ENCODE measurements at regions of chr2 and their contacts with region 1.

Region 1: DNA sequence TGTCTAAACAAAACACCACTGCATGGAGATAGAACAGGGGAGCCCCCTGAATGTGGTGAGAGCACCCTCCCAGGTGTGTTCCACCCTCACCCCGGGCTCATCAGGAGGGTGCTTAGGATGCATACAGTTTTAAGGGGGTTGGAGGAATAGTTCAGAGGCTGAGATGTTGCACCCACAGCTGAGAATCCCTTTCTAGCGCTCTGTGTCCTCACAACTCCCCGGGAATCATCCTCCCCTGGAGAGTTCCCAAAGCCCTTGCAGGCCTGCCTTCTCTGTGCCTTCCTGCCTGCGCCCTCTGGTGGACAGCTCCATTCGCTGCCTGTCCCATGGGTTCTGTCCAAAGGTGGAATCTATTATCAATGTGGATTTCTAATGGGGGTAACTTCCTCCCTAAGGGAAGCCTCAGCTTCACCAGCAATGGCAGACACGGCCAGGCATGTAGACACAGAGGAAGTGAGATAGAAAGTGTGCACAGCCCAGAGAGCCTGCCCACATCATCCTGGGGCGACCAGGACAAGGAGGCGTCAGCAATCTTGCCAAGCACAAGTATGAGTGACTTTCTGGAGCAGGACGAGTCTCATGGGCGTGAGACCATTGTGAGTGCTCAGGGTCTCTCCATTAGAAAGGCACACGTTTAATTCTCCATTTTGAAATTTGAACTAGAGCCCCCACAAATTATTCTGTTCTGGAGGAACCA is 1.2 kb upstream of the UGT1A5 start:
- DNase-seq: peak; percentile 75 to 78
- H3K4me3 ChIP-seq: no peak overlapping the region
- H3K4me3 Mint-ChIP-seq: no peak overlapping the region
- H3K27ac Mint-ChIP-seq: peak overlapping the region; percentile 6
- H3K4me1 ChIP-seq: peaks cover 22% of the 10 kb centered on the region
- H3K4me1 Mint-ChIP-seq: peaks cover 11% of the 10 kb centered on the region
- H3K27me3 ChIP-seq: no peaks in the 10 kb centered on the region
- H3K27me3 Mint-ChIP-seq: no peaks in the 10 kb centered on the region
- CTCF ChIP-seq: peak; percentile 64 to 78

Region 2: GRCh38 chr2:233480490-233481202 is 230.8 kb before region 1 on chr2:
- CTCF ChIA-PET with region 1: no interaction called
- POLR2A ChIA-PET with region 1: no interaction called
- intact Hi-C with region 1: loop called (anchors 2 kb)
- DNase-seq: peak in 1 of 2 experiments; percentile 36
- H3K4me3 ChIP-seq: no peak overlapping the region
- H3K4me3 Mint-ChIP-seq: peak overlapping the region; percentile 31
- H3K27ac Mint-ChIP-seq: peak overlapping the region; percentile 42
- H3K4me1 ChIP-seq: peaks cover 7% of the 10 kb centered on the region
- H3K4me1 Mint-ChIP-seq: peaks cover 11% of the 10 kb centered on the region
- H3K27me3 ChIP-seq: no peaks in the 10 kb centered on the region
- H3K27me3 Mint-ChIP-seq: no peaks in the 10 kb centered on the region
- CTCF ChIP-seq: no peak

Region 3: DNA sequence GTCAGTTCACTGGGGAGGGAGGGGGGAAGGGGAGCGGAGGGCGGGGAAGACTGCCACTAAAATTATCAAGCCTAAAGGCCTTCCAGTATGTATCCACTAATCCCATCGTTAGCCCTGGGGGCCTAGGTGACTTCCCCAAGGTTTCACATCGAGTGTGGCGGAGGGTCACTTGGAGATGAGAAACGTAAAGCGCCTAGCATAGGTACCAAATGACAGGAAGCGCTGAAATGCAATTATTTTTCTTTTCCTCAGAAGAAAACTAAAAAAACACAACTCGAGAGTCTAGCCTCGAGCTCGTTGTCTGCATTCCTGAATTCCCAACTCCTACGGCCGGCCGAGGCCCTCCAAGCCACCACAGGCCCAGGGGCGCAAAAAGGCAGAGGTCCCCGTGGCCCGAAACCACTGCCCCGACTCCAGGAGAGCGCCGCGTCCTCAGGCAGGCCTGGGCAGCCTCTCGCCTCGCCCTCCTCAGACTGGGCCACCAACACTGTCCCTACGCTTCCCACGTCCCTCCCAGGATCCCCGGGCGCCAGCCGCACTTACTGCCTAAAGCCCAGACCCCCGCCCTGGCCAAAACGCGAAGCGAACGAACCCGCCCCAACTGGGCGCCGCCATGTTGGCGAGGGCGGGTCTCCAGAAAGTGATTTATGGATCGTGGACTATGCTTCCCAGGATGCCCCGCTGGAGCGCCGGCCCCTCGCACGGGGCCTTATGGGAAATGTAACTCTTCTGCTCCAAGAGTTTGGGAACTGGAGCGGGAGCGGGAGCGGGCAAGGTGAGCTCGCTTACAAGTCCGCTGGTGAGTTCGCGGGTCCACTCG is 145.1 kb before region 1 on chr2 and contains the start of gene USP40:
- CTCF ChIA-PET with region 1: no interaction called
- POLR2A ChIA-PET with region 1: no interaction called
- intact Hi-C with region 1: loop called (anchors 5 kb)
- DNase-seq: peak; percentile 89 to 91
- H3K4me3 ChIP-seq: peak within 1 kb of the TSS; percentile 89
- H3K4me3 Mint-ChIP-seq: peak within 1 kb of the TSS; percentile 89
- H3K27ac Mint-ChIP-seq: peak within 1 kb of the TSS; percentile 97
- H3K4me1 ChIP-seq: peaks cover 5% of the 10 kb centered on the region; the same call in 1 of the 2 replicates
- H3K4me1 Mint-ChIP-seq: peaks cover 13% of the 10 kb centered on the region
- H3K27me3 ChIP-seq: no peaks in the 10 kb centered on the region
- H3K27me3 Mint-ChIP-seq: peaks cover 2% of the 10 kb centered on the region
- CTCF ChIP-seq: no peak
- total RNA-seq, gene USP40: 27.4 and 27.8 TPM in 2 replicates

Region 4: DNA sequence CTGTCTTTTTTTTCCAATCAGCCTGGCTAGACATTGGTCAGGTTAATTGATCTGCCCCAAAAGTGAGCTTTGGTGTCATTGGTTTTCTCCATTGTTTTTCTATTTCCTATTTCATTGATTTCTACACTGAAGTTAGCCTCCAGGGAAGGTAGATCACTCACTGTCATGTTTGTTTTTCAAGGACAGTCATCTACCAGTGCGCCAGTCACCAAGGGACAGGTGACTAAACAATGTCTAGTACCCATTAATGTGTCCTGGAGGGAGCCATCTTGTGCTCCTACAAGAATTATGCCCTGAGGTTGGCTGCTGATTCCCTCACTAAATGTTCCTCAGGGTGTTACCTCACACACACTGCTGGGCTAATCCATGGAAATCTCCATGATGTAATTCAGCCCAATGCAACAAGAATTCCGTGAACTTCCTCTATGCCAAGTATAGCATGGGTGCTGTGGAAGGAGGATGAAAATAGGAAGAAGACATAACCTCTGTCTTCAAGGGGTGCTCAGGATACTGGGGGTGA is 127.2 kb before region 1 on chr2:
- CTCF ChIA-PET with region 1: no interaction called
- POLR2A ChIA-PET with region 1: no interaction called
- intact Hi-C with region 1: loop called (anchors 5 kb)
- DNase-seq: no peak
- H3K4me3 ChIP-seq: no peak overlapping the region
- H3K4me3 Mint-ChIP-seq: peak overlapping the region; percentile 88
- H3K27ac Mint-ChIP-seq: peak overlapping the region; percentile 96
- H3K4me1 ChIP-seq: no peaks in the 10 kb centered on the region
- H3K4me1 Mint-ChIP-seq: peaks cover 4% of the 10 kb centered on the region
- H3K27me3 ChIP-seq: no peaks in the 10 kb centered on the region
- H3K27me3 Mint-ChIP-seq: no peaks in the 10 kb centered on the region
- CTCF ChIP-seq: no peak